Esophagus squamous epithelium (tissue), 5 donors: ENCODE measurements at regions of chr20 and their contacts with region 1.

Region 1: DNA sequence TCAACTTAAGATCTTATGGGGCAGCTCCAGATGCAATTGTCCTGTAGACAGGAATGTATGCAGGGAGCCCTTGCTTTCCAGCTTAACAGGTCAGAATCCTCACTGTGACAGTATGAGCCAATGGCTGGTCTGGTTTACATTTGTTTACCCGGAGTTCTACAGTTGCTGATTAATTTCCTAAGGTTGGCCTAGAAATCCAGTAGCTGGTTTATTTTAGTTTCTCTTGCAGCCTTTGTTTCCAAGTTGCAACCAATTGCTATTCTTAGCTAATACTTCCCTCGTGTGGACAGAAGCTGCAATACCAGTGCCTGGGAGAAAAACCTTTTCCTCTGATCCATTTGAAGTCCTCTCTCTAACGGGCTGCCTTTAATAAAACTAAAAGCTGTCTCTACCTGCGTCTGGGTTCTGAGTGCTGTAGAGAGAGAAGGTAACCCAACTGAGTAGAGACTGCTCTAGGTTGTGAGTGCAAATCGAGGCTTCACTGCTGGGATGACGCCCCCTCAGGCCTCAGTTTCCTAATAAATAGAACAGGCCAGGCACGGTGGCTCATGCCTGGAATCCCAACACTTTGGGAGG is 45.9 kb downstream of the ZNF217 start:
- DNase-seq: no peak
- H3K4me3 ChIP-seq: no peak overlapping the region
- H3K27ac ChIP-seq: no peak overlapping the region
- H3K4me1 ChIP-seq: no peaks in the 10 kb centered on the region
- H3K27me3 ChIP-seq: no peaks in the 10 kb centered on the region
- CTCF ChIP-seq: peak; percentile 39 to 87 (median 75)
- POLR2A ChIP-seq: no peak

Region 2: GRCh38 chr20:53238121-53238660 is 309.6 kb before region 1 on chr20:
- intact Hi-C with region 1: loop called (anchors 10 kb)
- DNase-seq: no peak
- H3K4me3 ChIP-seq: no peak overlapping the region
- H3K27ac ChIP-seq: no peak overlapping the region
- H3K4me1 ChIP-seq: no peaks in the 10 kb centered on the region
- H3K27me3 ChIP-seq: no peaks in the 10 kb centered on the region
- CTCF ChIP-seq: no peak
- POLR2A ChIP-seq: no peak

Region 3: DNA sequence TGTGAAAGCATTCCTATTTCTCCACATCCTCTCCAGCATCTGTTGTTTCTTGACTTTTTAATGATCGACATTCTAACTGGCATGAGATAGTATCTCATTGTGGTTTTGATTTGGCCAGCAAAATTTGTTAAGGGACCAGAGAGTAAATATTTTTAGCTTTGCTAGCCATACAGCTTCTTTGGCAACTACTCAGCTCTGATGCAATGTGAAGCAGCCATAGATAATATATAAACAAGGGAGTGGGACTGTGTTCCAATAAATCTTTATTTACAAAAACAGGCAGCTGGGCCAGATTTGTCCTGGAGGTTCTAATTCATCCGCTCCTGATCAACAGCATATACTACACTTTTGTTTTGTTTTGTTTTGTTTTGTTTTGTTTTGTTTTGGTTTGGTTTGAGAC is 157.0 kb before region 1 on chr20:
- intact Hi-C with region 1: no loop called
- DNase-seq: no peak
- H3K4me3 ChIP-seq: no peak overlapping the region
- H3K27ac ChIP-seq: no peak overlapping the region
- H3K4me1 ChIP-seq: no peaks in the 10 kb centered on the region
- H3K27me3 ChIP-seq: no peaks in the 10 kb centered on the region
- CTCF ChIP-seq: no peak
- POLR2A ChIP-seq: no peak

Region 4: DNA sequence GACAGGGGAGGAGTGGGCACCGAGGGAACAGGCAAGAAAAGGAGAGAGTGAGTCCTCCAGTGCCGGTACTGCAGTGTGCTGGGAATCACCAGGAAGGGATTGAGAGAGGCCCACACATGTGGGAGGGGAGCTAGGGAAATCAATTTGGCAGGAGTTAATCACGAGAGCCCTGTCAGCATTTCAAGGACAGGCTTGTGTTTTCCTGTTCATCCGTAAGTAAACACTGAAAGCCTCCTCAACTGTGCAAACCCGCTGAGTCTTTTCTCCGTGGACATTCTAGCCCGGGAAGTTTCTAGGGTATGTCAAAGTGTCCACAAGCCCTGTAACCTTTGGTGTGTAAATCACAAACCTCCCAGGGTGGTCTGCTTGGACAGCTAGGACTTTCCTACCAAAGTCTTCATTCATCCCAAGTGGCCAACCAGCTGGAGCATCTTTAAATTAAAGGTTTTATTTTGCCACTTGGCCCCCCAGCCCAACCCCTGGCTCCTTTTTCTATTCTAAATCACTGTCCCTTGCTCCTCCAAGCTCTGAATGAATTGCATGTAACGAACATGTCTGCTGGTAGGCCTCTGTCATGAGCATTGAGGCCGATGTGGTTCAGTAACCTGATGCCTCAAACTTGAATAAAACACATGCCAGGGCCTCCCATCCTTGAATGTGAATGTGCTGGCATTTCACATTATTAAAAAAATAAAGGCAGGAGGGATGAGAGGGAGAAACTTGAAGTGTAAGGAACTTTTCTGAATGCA is 103.2 kb before region 1 on chr20:
- intact Hi-C with region 1: no loop called
- DNase-seq: no peak
- H3K4me3 ChIP-seq: no peak overlapping the region
- H3K27ac ChIP-seq: no peak overlapping the region
- H3K4me1 ChIP-seq: peaks cover 0 to 9% (median 0%) of the 10 kb centered on the region in 3 donors
- H3K27me3 ChIP-seq: no peaks in the 10 kb centered on the region
- CTCF ChIP-seq: no peak
- POLR2A ChIP-seq: no peak

Region 5: DNA sequence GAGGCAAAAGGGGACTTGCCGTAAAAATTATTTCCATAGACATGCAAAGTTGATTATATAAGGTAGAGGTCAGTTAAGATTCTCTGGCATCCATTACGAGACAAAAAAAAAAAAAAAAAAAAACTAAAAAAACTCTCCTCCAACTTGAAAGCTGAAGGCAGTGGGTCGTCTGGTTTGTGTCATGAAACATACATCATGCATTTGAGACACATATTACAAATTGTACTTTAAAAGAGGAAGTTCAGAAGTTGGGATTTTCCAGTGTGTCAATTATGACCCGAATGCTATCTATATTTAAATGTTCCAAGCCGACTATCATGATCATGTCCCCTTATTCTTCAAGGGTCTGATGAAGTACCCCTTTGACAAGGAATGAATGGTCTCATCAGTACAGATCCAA is 79.2 kb before region 1 on chr20:
- intact Hi-C with region 1: no loop called
- DNase-seq: no peak
- H3K4me3 ChIP-seq: no peak overlapping the region
- H3K27ac ChIP-seq: no peak overlapping the region
- H3K4me1 ChIP-seq: no peaks in the 10 kb centered on the region
- H3K27me3 ChIP-seq: no peaks in the 10 kb centered on the region
- CTCF ChIP-seq: no peak
- POLR2A ChIP-seq: no peak